ENCODE measurements at regions of chr7 and their contacts with region 1.

Region 1: DNA sequence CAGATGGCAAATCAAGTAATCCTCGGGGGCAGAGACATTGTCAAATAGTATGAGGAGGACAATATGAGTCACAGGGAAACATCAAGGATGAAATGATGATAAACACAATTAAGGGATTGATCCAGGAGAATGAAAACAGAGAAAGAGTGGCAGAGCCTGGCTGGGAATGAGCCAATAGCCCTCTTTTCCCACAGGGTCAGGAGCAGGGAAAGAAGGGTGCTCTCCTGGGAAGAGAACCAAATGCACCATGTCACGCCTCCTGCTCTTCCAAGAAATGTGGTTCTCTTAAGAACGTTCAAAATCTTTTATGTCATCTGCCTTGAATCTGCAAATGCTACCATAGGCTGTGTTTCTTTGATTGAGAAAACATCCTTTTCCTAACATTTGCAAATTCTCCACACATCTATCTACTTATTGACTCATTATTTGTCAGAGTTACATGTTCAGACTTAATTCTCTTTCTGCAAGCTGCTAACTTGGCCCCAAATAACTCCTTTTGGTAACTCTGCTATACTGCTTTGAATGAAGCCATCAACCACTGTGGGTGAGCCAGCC is 50.6 kb downstream of the HIPK2 start:
- DNase-seq: no peak
- ATAC-seq: no peak
- H3K4me3 ChIP-seq: no peak overlapping the region
- H3K27ac ChIP-seq: no peak overlapping the region
- H3K4me1 ChIP-seq: peaks cover 0 to 5% of the 10 kb centered on the region in 2 experiments; a peak in 2 of 5 replicates
- H3K27me3 ChIP-seq: no peaks in the 10 kb centered on the region
- CTCF ChIP-seq: no peak
- EP300 ChIP-seq: no peak
- POLR2A ChIP-seq: no peak
- RAD21 ChIP-seq: no peak

Region 2: GRCh38 chr7:139737221-139738100 is 10.2 kb after region 1 on chr7:
- CTCF ChIA-PET with region 1: no interaction called
- POLR2A ChIA-PET with region 1: interaction called, 11 read pairs
- in situ Hi-C with region 1: no loop called
- intact Hi-C with region 1: no loop called
- DNase-seq: no peak
- ATAC-seq: no peak
- H3K4me3 ChIP-seq: no peak overlapping the region
- H3K27ac ChIP-seq: no peak overlapping the region
- H3K4me1 ChIP-seq: no peaks in the 10 kb centered on the region
- H3K27me3 ChIP-seq: peaks cover 0 to 16% of the 10 kb centered on the region in 2 experiments; a peak in 1 of 5 replicates
- CTCF ChIP-seq: no peak
- EP300 ChIP-seq: no peak
- POLR2A ChIP-seq: no peak
- RAD21 ChIP-seq: no peak